MCF 10A (cell line): ENCODE measurements at regions of chr2 and their contacts with region 1.

Region 1: GRCh38 chr2:64914735-64915509 is 74.3 kb upstream of the SLC1A4 start:
- DNase-seq: no peak
- H3K4me3 Mint-ChIP-seq: no peak overlapping the region
- H3K27ac Mint-ChIP-seq: no peak overlapping the region
- H3K4me1 Mint-ChIP-seq: no peaks in the 10 kb centered on the region
- H3K27me3 Mint-ChIP-seq: no peaks in the 10 kb centered on the region
- CTCF ChIP-seq: no peak

Region 2: DNA sequence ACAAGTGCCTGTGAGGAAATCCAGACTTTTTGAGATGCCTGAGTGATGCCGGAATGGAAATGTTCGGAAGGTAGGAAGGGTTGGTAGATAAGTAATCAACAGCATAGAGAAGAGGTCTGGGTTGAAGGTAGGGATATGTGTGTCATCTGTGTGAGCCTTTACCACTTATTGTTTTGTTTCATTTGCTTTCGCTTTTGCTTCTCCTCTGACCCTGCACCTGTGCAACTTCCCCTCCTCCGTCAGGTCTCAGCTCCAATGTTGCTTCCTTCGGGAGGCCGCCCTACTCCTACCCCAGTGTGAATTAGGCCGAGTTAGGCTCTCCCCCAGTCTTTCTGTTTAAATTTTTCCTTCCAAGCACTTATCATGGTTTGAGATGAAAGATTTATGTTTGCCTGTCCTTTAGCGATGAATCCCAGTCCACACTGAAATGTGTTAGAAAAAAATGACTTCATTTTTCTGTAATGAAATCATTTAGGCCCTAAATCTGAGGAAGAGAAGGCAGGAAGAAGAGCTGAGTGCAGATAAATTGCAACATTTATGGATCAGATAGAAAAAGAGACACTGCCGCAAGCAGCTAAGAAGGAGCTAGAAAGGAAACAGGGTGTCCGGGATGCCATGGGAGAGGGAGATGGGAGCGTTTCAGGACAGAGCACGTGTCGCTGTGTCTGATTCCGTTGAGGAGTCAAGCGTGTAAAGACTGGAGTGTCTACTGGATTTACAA is 631.1 kb before region 1 on chr2:
- CTCF ChIA-PET with region 1: no interaction called
- POLR2A ChIA-PET with region 1: no interaction called
- intact Hi-C with region 1: no loop called
- DNase-seq: no peak
- H3K4me3 Mint-ChIP-seq: no peak overlapping the region
- H3K27ac Mint-ChIP-seq: no peak overlapping the region
- H3K4me1 Mint-ChIP-seq: no peaks in the 10 kb centered on the region
- H3K27me3 Mint-ChIP-seq: no peaks in the 10 kb centered on the region
- CTCF ChIP-seq: no peak

Region 3: GRCh38 chr2:64653349-64654062 is 261.4 kb before region 1 on chr2 and contains the start of gene SERTAD2:
- CTCF ChIA-PET with region 1: no interaction called
- POLR2A ChIA-PET with region 1: no interaction called
- intact Hi-C with region 1: no loop called
- DNase-seq: peak; percentile 86
- H3K4me3 Mint-ChIP-seq: peak within 1 kb of the TSS; percentile 77
- H3K27ac Mint-ChIP-seq: peak within 1 kb of the TSS; percentile 89
- H3K4me1 Mint-ChIP-seq: peaks cover 22% of the 10 kb centered on the region
- H3K27me3 Mint-ChIP-seq: no peaks in the 10 kb centered on the region
- CTCF ChIP-seq: no peak
- total RNA-seq, gene SERTAD2: 15.0 and 21.6 TPM in 2 replicates

Region 4: GRCh38 chr2:64952511-64953482 is 37.9 kb after region 1 on chr2:
- CTCF ChIA-PET with region 1: interaction called, 11 read pairs
- POLR2A ChIA-PET with region 1: no interaction called
- intact Hi-C with region 1: no loop called
- DNase-seq: peak; percentile 70
- H3K4me3 Mint-ChIP-seq: no peak overlapping the region
- H3K27ac Mint-ChIP-seq: no peak overlapping the region
- H3K4me1 Mint-ChIP-seq: peaks cover 18% of the 10 kb centered on the region
- H3K27me3 Mint-ChIP-seq: no peaks in the 10 kb centered on the region
- CTCF ChIP-seq: no peak

Region 5: GRCh38 chr2:64988420-64989125 is 73.7 kb after region 1 on chr2:
- CTCF ChIA-PET with region 1: interaction called, 6 read pairs
- POLR2A ChIA-PET with region 1: interaction called, 9 read pairs
- intact Hi-C with region 1: loop called (anchors 1 kb)
- DNase-seq: peak; percentile 77
- H3K4me3 Mint-ChIP-seq: peak overlapping the region; percentile 91
- H3K27ac Mint-ChIP-seq: peak overlapping the region; percentile 61
- H3K4me1 Mint-ChIP-seq: peaks cover 47% of the 10 kb centered on the region
- H3K27me3 Mint-ChIP-seq: no peaks in the 10 kb centered on the region
- CTCF ChIP-seq: peak; percentile 36

Region 6: GRCh38 chr2:65033178-65033577 is 118.3 kb after region 1 on chr2:
- CTCF ChIA-PET with region 1: interaction called, 112 read pairs
- POLR2A ChIA-PET with region 1: interaction called, 3 read pairs
- intact Hi-C with region 1: loop called (anchors 1 kb)
- DNase-seq: peak; percentile 22
- H3K4me3 Mint-ChIP-seq: no peak overlapping the region
- H3K27ac Mint-ChIP-seq: no peak overlapping the region
- H3K4me1 Mint-ChIP-seq: peaks cover 13% of the 10 kb centered on the region
- H3K27me3 Mint-ChIP-seq: no peaks in the 10 kb centered on the region
- CTCF ChIP-seq: peak; percentile 24

Region 7: DNA sequence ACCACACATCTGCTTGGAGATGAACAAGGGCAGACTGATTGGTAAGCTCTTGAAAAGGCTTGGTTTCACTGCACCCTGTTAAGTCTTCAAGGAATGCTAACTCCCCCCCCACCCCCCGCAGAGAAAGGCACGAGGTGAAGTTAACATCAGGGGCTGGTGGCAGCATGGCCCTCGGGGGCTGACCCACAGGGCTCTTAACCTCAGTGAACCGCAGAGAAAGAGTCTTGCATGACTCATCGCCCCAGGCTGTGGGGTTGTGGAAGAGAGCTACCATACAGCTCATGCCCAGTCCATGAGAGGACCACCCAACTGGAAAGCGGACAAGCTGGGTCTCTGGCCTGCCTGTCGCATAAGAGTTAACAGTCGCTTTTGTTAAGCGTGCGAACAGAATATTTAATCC is 130.7 kb after region 1 on chr2:
- CTCF ChIA-PET with region 1: interaction called, 112 read pairs
- POLR2A ChIA-PET with region 1: interaction called, 3 read pairs
- intact Hi-C with region 1: loop called (anchors 1 kb)
- DNase-seq: no peak
- H3K4me3 Mint-ChIP-seq: no peak overlapping the region
- H3K27ac Mint-ChIP-seq: no peak overlapping the region
- H3K4me1 Mint-ChIP-seq: no peaks in the 10 kb centered on the region
- H3K27me3 Mint-ChIP-seq: no peaks in the 10 kb centered on the region
- CTCF ChIP-seq: no peak

Region 8: GRCh38 chr2:65116645-65117044 is 201.7 kb after region 1 on chr2:
- CTCF ChIA-PET with region 1: no interaction called
- POLR2A ChIA-PET with region 1: no interaction called
- intact Hi-C with region 1: no loop called
- DNase-seq: no peak
- H3K4me3 Mint-ChIP-seq: no peak overlapping the region
- H3K27ac Mint-ChIP-seq: no peak overlapping the region
- H3K4me1 Mint-ChIP-seq: peaks cover 11% of the 10 kb centered on the region
- H3K27me3 Mint-ChIP-seq: no peaks in the 10 kb centered on the region
- CTCF ChIP-seq: no peak

Region 9: GRCh38 chr2:65165558-65165957 is 250.6 kb after region 1 on chr2:
- CTCF ChIA-PET with region 1: interaction called, 3 read pairs
- POLR2A ChIA-PET with region 1: interaction called, 3 read pairs
- intact Hi-C with region 1: loop called (anchors 1 kb)
- DNase-seq: no peak
- H3K4me3 Mint-ChIP-seq: no peak overlapping the region
- H3K27ac Mint-ChIP-seq: no peak overlapping the region
- H3K4me1 Mint-ChIP-seq: no peaks in the 10 kb centered on the region
- H3K27me3 Mint-ChIP-seq: no peaks in the 10 kb centered on the region
- CTCF ChIP-seq: no peak